ENCODE measurements at regions of chr2 and their contacts with region 1.

Region 1: DNA sequence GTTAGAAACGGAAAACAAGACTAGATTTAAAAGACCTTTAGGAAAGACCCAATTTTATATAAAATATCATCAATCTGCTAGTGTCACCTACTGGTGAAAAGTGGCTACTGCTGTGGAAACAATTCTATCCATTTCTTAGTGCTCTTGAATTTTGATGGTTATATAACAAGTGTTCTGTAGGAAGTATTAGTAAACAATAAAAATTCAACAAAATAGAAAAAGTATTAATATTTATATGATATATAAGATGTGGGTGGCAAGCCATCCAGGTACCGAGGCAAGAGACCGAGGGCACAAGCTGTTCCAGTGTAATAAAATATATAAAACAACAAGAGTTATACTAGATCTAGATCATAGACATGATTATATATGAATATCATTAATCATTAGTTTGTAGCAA is 6.2 kb upstream of the TMEM87B start:
- DNase-seq: peak in 1 of 2 donors; percentile 58
- ATAC-seq: peak in 6 of 8 donors; percentile 59 to 87 (median 83)
- H3K4me3 ChIP-seq: no peak overlapping the region
- H3K27ac ChIP-seq: no peak overlapping the region
- H3K4me1 ChIP-seq: peaks cover 0 to 29% (median 23%) of the 10 kb centered on the region in 9 donors
- H3K27me3 ChIP-seq: no peaks in the 10 kb centered on the region
- CTCF ChIP-seq: peak; percentile 67 to 91 (median 83)

Region 2: DNA sequence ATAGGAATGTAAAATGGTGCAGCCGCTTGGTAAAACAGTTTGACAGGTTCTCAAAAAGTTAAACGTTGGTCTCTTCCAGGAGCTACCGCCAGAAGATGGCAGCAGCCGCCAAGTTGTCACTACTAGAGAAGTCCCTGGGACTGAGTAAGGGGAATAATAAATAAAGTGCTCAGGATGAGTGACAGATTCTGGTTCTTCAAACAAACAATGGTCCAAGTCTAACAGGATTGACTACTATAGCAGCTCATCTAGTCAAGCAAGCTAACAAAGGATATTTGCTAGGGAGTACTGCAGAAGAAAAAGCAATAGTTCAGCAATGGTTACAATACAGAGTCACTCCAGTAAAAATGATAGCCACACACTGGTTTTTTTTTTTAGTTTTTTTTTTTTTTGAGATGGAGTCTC is 161.1 kb before region 1 on chr2:
- intact Hi-C with region 1: loop called in 6 of 10 experiments (anchors 1 to 5 kb)
- DNase-seq: peak; percentile 72 to 73
- ATAC-seq: peak in 7 of 8 donors; percentile 43 to 61 (median 55)
- H3K4me3 ChIP-seq: no peak overlapping the region
- H3K27ac ChIP-seq: no peak overlapping the region
- H3K4me1 ChIP-seq: peaks cover 0 to 19% (median 11%) of the 10 kb centered on the region in 9 donors
- H3K27me3 ChIP-seq: no peaks in the 10 kb centered on the region
- CTCF ChIP-seq: peak; percentile 53 to 88 (median 77)

Region 3: DNA sequence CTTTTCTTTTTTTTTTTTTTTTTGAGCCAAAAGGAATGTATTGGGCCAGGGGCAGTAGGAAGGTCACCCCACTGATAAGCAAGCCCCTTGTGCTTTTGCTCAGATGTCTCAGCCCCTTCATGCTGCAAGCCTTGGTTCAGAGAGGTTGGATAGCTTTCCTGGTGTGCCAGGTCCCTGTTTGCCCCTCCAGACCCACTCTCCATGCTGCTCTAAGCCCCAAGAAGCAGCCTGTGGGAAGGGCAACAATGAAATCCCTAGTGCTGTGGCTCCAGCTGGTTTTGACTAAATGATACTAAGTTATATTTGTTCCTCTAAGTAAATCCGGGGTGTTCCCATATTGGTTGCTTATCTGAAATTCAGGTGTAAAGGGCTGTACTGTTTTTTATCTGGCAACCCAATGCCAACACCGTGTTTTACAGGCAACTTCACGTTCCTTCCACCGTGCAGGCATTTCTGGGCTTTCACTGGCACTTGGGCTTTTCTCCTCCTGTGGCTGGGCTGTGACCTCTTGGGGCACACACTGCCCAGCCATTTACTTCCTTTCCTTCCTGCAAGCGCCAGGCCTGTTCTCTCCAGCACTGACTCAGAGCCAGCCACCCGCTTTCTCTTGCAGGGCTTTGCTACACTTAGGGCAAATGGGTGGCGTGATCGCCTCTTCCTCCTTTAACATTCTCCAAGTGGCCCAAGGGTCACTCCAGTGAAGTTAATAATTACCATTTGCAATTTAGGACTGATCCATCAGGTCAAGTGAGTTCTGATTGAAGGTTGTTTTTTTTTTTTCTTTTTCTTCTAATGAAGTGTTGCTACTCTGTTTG is 128.9 kb before region 1 on chr2:
- intact Hi-C with region 1: no loop called
- DNase-seq: peak; percentile 38 to 48
- ATAC-seq: peak; percentile 54 to 91 (median 74)
- H3K4me3 ChIP-seq: no peak overlapping the region
- H3K27ac ChIP-seq: peak overlapping the region in 4 of 10 donors; percentile 19 to 50 (median 30)
- H3K4me1 ChIP-seq: peaks cover 0 to 33% (median 15%) of the 10 kb centered on the region in 9 donors
- H3K27me3 ChIP-seq: no peaks in the 10 kb centered on the region
- CTCF ChIP-seq: no peak

Region 4: GRCh38 chr2:111975053-111975552 is 73.8 kb before region 1 on chr2:
- intact Hi-C with region 1: loop called in 1 of 10 experiments (anchors 10 kb)
- DNase-seq: no peak
- ATAC-seq: peak in 2 of 8 donors; percentile 27 to 46
- H3K4me3 ChIP-seq: no peak overlapping the region
- H3K27ac ChIP-seq: peak overlapping the region in 1 of 10 donors; percentile 33
- H3K4me1 ChIP-seq: peaks cover 0 to 22% (median 17%) of the 10 kb centered on the region in 9 donors
- H3K27me3 ChIP-seq: no peaks in the 10 kb centered on the region
- CTCF ChIP-seq: no peak